Endothelial cell of umbilical vein (primary cell): ENCODE measurements at regions of chr14 and their contacts with region 1.

Region 1: GRCh38 chr14:100192672-100193416 is 33.4 kb upstream of the DEGS2 start:
- DNase-seq: peak; percentile 97
- H3K4me3 ChIP-seq: peak overlapping the region in 2 of 3 experiments; percentile 12 to 30
- H3K27ac ChIP-seq: peak overlapping the region; percentile 45
- H3K4me1 ChIP-seq: peaks cover 5% of the 10 kb centered on the region
- H3K27me3 ChIP-seq: no peaks in the 10 kb centered on the region
- CTCF ChIP-seq: peak; percentile 96 to 99
- POLR2A ChIP-seq: no peak

Region 2: DNA sequence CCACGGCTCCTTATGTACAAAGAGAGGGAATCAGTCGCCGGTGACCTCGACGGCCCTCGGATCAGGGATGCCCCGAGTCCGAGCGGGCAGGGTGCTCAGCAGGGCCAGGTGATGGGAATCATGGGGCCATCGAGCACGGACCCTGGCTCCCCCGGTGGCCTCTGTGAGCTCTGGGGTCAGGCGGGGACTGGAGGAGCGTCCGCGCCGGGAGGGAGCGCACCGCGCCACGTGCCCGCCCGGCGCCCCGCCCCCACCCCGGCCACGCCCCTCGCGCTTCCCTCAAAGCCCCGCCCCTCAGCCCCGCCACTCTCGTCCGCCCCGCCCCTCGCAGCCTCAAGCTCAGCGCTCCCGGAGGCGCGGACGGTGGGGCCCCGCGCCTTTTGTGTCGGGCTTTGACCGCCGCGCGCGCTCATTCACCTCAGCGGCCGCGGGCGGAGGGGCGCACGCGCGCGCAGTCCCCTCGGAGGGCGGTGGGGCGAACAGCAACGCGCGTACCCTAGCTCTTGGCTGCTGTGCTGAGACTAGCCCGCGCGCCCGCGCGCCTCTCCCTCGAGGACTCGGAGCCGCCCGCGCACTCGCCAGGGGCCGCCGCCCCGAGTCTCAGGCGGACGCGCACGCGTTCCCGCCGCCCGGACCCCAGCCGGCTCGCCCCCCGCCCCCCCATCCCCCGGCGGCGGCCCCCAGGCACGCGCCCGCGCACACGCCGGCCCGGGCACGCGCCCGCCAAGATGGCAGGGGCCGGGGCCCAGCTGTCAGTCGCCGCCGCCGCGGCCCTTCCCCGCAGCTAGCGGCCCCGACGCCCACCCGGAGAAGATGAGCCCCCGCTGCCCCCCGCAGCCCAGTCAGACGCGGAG is 221.5 kb before region 1 on chr14:
- CTCF ChIA-PET with region 1: interaction called, 14 read pairs
- POLR2A ChIA-PET with region 1: no interaction called
- dilution Hi-C with region 1: no loop called
- intact Hi-C with region 1: loop called (anchors 2 kb)
- DNase-seq: peak; percentile 85
- H3K4me3 ChIP-seq: peak overlapping the region; percentile 47 to 80 (median 49)
- H3K27ac ChIP-seq: no peak overlapping the region
- H3K4me1 ChIP-seq: peaks cover 7% of the 10 kb centered on the region
- H3K27me3 ChIP-seq: peaks cover 10 to 12% of the 10 kb centered on the region in 2 experiments
- CTCF ChIP-seq: no peak
- POLR2A ChIP-seq: peak; percentile 33

Region 3: GRCh38 chr14:100056964-100057795 is 135.7 kb before region 1 on chr14:
- CTCF ChIA-PET with region 1: interaction called, 5 read pairs
- POLR2A ChIA-PET with region 1: no interaction called
- dilution Hi-C with region 1: no loop called
- intact Hi-C with region 1: loop called (anchors 2 kb)
- DNase-seq: peak; percentile 39
- H3K4me3 ChIP-seq: no peak overlapping the region
- H3K27ac ChIP-seq: no peak overlapping the region
- H3K4me1 ChIP-seq: peaks cover 9% of the 10 kb centered on the region
- H3K27me3 ChIP-seq: no peaks in the 10 kb centered on the region
- CTCF ChIP-seq: peak in 1 of 2 donors; percentile 28
- POLR2A ChIP-seq: no peak

Region 4: GRCh38 chr14:100108042-100108825 is 84.6 kb before region 1 on chr14:
- CTCF ChIA-PET with region 1: interaction called, 16 read pairs
- POLR2A ChIA-PET with region 1: no interaction called
- dilution Hi-C with region 1: no loop called
- intact Hi-C with region 1: loop called (anchors 1 kb)
- DNase-seq: peak; percentile 69
- H3K4me3 ChIP-seq: no peak overlapping the region
- H3K27ac ChIP-seq: no peak overlapping the region
- H3K4me1 ChIP-seq: peaks cover 19% of the 10 kb centered on the region
- H3K27me3 ChIP-seq: no peaks in the 10 kb centered on the region
- CTCF ChIP-seq: peak; percentile 86 to 97
- POLR2A ChIP-seq: no peak

Region 5: GRCh38 chr14:100140452-100141078 is 52.3 kb before region 1 on chr14:
- CTCF ChIA-PET with region 1: interaction called, 15 read pairs
- POLR2A ChIA-PET with region 1: no interaction called
- dilution Hi-C with region 1: no loop called
- intact Hi-C with region 1: loop called (anchors 1 kb)
- DNase-seq: peak; percentile 81
- H3K4me3 ChIP-seq: no peak overlapping the region
- H3K27ac ChIP-seq: peak overlapping the region; percentile 83
- H3K4me1 ChIP-seq: peaks cover 31% of the 10 kb centered on the region
- H3K27me3 ChIP-seq: no peaks in the 10 kb centered on the region
- CTCF ChIP-seq: peak; percentile 57 to 84
- POLR2A ChIP-seq: no peak

Region 6: GRCh38 chr14:100239840-100240724 is 47.2 kb after region 1 on chr14:
- CTCF ChIA-PET with region 1: interaction called, 5 read pairs
- POLR2A ChIA-PET with region 1: no interaction called
- dilution Hi-C with region 1: no loop called
- intact Hi-C with region 1: loop called (anchors 2 kb)
- DNase-seq: peak; percentile 94
- H3K4me3 ChIP-seq: peak overlapping the region; percentile 72 to 92 (median 86)
- H3K27ac ChIP-seq: peak overlapping the region; percentile 51
- H3K4me1 ChIP-seq: peaks cover 22% of the 10 kb centered on the region
- H3K27me3 ChIP-seq: no peaks in the 10 kb centered on the region
- CTCF ChIP-seq: peak; percentile 40 to 62
- POLR2A ChIP-seq: no peak

Region 7: GRCh38 chr14:100568164-100568997 is 375.5 kb after region 1 on chr14:
- CTCF ChIA-PET with region 1: no interaction called
- POLR2A ChIA-PET with region 1: no interaction called
- dilution Hi-C with region 1: no loop called
- intact Hi-C with region 1: no loop called
- DNase-seq: no peak
- H3K4me3 ChIP-seq: no peak overlapping the region
- H3K27ac ChIP-seq: no peak overlapping the region
- H3K4me1 ChIP-seq: peaks cover 2% of the 10 kb centered on the region
- H3K27me3 ChIP-seq: peaks cover 28 to 32% of the 10 kb centered on the region in 2 experiments
- CTCF ChIP-seq: no peak
- POLR2A ChIP-seq: no peak